Transverse colon (tissue), 4 donors: ENCODE measurements at regions of chr16 and their contacts with region 1.

Region 1: DNA sequence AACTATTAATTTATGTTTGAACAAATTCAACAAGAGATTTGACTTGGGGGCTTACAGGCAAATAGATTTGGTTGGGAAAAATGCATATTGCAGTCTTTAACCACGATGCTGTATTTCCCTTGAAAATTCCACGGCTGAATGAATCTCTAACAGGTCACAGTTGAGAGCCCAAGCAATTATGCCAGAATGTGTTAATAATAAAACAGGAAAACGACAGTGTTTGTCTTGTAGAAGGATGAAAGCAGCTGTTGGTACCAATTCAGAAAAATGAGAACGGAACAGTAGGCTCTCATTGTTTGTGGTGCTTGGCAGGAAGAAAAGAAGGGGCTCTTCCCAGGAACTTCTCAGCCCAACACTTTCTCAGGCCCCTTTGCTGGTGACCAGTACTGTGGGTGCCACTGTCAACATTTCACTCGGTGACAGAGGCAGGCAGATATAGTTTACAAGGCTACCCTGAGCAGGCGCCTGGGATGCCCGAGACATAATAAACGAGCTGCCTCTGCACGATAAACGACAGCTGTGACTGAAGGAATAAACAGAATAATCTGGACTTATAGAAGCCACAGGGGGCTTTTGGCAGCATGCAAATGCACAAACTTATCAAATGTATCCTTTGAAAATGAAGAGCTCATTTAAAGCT is 387.1 kb downstream of the HS3ST4 start:
- DNase-seq: no peak
- H3K4me3 ChIP-seq: no peak overlapping the region
- H3K27ac ChIP-seq: no peak overlapping the region
- H3K4me1 ChIP-seq: no peaks in the 10 kb centered on the region
- H3K27me3 ChIP-seq: no peaks in the 10 kb centered on the region
- CTCF ChIP-seq: no peak
- EP300 ChIP-seq: no peak
- POLR2A ChIP-seq: no peak

Region 2: GRCh38 chr16:26025046-26025445 is 53.8 kb before region 1 on chr16:
- in situ Hi-C with region 1: no loop called
- intact Hi-C with region 1: loop called (anchors 2 kb)
- DNase-seq: no peak
- H3K4me3 ChIP-seq: no peak overlapping the region
- H3K27ac ChIP-seq: no peak overlapping the region
- H3K4me1 ChIP-seq: no peaks in the 10 kb centered on the region
- H3K27me3 ChIP-seq: no peaks in the 10 kb centered on the region
- CTCF ChIP-seq: no peak
- EP300 ChIP-seq: no peak
- POLR2A ChIP-seq: no peak

Region 3: DNA sequence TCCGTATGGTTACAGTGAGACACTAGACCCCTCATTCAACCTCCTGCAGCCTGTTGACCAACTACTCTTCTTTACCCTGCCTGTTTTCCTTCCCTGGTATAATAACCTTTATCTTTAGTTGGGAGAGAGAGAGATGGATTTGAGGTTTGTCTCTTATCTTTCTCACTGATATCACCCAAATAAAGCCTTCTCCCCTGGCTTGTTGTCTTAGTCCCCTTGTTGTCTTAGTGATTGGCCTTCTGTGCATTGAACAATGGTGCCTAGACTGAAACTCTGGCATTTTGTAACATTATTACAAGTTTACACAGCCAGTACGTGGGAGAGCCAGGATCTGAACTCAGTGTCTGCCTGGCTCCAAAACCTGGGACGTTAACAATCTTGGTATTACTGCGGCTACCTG is 173.8 kb after region 1 on chr16:
- in situ Hi-C with region 1: no loop called
- intact Hi-C with region 1: no loop called
- DNase-seq: no peak
- H3K4me3 ChIP-seq: no peak overlapping the region
- H3K27ac ChIP-seq: no peak overlapping the region
- H3K4me1 ChIP-seq: no peaks in the 10 kb centered on the region
- H3K27me3 ChIP-seq: no peaks in the 10 kb centered on the region
- CTCF ChIP-seq: no peak
- EP300 ChIP-seq: no peak
- POLR2A ChIP-seq: no peak